SK-N-SH (cell line): ENCODE measurements at regions of chr15 and their contacts with region 1.

Region 1: DNA sequence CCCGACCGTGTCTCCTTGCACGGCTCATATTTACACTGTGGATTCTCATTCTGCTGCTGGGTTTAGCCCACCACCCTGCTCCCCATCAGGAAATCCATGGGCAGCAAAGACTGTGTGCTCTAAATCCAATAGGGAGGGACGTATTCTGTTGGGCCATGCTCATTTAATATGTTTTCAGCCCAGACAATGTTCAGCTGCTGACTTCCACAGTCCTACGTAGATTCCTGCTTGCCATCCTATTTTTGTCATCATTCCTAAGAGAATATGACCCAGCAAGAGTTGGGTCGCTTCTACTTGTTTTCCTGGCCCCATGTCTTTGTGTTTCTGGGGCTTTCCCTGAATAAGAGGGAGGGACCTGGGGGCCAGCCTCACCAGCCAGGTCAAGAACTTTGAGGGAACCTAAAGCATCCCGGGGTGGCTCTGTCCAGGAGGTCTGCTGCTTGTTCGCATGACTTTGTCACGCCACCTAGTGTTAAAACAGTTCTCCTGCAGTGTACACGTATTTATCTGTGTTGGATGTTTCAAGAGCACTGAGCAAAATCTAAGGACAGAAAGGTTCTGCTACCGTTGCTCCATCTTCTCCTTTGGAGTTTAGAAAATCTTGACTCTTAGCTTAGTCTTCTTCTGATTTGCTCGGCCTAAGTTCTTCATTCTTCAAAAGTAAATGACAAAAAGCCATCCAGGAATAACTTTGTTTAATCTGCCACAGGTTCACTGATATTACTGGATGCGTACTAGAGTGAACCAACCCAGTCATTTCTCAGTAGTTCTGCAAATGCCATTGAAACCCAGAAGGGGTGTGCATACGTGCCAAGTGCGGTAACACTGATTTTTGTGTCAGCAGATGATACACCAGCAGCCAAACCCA is 79.8 kb upstream of the NR2E3 start:
- DNase-seq: peak; percentile 71
- H3K4me3 ChIP-seq: no peak overlapping the region
- H3K27ac ChIP-seq: no peak overlapping the region
- H3K4me1 ChIP-seq: peaks cover 0 to 5% of the 10 kb centered on the region in 2 experiments; a peak in 3 of 4 replicates
- H3K27me3 ChIP-seq: no peaks in the 10 kb centered on the region
- CTCF ChIP-seq: peak; percentile 86
- EP300 ChIP-seq: no peak
- RAD21 ChIP-seq: peak; percentile 88

Region 2: DNA sequence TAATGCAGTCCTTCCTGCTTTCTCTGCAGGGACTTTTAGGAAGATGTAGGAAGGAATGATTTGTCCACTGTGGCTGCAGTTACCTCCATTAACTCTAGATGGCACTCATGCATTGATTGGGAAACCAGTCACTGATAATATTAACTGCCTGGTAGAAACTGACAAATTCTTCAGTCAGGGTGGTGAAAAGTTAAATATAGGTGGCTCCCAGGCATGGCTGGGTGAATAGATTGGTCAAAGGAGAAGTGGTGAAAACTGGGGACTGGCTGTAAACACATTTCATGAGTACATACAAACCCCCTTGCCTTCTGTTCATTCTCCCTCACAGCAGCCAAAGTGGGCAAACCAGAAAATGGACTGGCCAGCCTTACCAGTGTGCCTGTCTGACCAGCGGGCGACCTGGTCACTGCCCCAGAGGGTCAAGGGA is 281.8 kb before region 1 on chr15:
- CTCF ChIA-PET with region 1: interaction called, 18 read pairs
- POLR2A ChIA-PET with region 1: no interaction called
- DNase-seq: peak; percentile 47
- H3K4me3 ChIP-seq: no peak overlapping the region; a peak in 1 of 4 replicates
- H3K27ac ChIP-seq: no peak overlapping the region; a peak in 1 of 4 replicates
- H3K4me1 ChIP-seq: peaks cover 0 to 27% of the 10 kb centered on the region in 2 experiments; a peak in 3 of 4 replicates
- H3K27me3 ChIP-seq: no peaks in the 10 kb centered on the region
- CTCF ChIP-seq: peak; percentile 91
- EP300 ChIP-seq: no peak
- RAD21 ChIP-seq: peak; percentile 91

Region 3: GRCh38 chr15:71707230-71708050 is 23.1 kb before region 1 on chr15:
- CTCF ChIA-PET with region 1: interaction called, 14 read pairs
- POLR2A ChIA-PET with region 1: no interaction called
- DNase-seq: peak; percentile 37
- H3K4me3 ChIP-seq: no peak overlapping the region
- H3K27ac ChIP-seq: peak overlapping the region; percentile 89 to 95
- H3K4me1 ChIP-seq: peaks cover 21 to 37% of the 10 kb centered on the region in 2 experiments
- H3K27me3 ChIP-seq: no peaks in the 10 kb centered on the region
- CTCF ChIP-seq: no peak
- EP300 ChIP-seq: peak; percentile 39 to 89; a peak in 3 of 4 replicates
- RAD21 ChIP-seq: 0 out of 2 replicates have a peak, but pooled peaks have one; percentile 6

Region 4: GRCh38 chr15:71716990-71717389 is 13.5 kb before region 1 on chr15:
- CTCF ChIA-PET with region 1: interaction called, 13 read pairs
- POLR2A ChIA-PET with region 1: no interaction called
- DNase-seq: no peak
- H3K4me3 ChIP-seq: no peak overlapping the region
- H3K27ac ChIP-seq: peak overlapping the region; percentile 21 to 53; a peak in 2 of 4 replicates
- H3K4me1 ChIP-seq: peaks cover 2 to 5% of the 10 kb centered on the region in 2 experiments; a peak in 2 of 4 replicates
- H3K27me3 ChIP-seq: no peaks in the 10 kb centered on the region
- CTCF ChIP-seq: no peak
- EP300 ChIP-seq: peak in 1 of 2 experiments; percentile 22; a peak in 1 of 4 replicates
- RAD21 ChIP-seq: no peak